Caco-2 (cell line): ENCODE measurements at regions of chr5 and their contacts with region 1.

Region 1: GRCh38 chr5:112283943-112284929 is 134.8 kb downstream of the EPB41L4A start:
- DNase-seq: no peak
- H3K4me3 ChIP-seq: no peak overlapping the region
- H3K4me3 Mint-ChIP-seq: no peak overlapping the region
- H3K27ac Mint-ChIP-seq: no peak overlapping the region
- H3K4me1 ChIP-seq: no peaks in the 10 kb centered on the region
- H3K4me1 Mint-ChIP-seq: no peaks in the 10 kb centered on the region
- H3K27me3 ChIP-seq: 0 out of 2 replicates have a peak, but pooled peaks cover 2% of the 10 kb centered on the region
- H3K27me3 Mint-ChIP-seq: peaks cover under 1% of the 10 kb centered on the region
- CTCF ChIP-seq: no peak

Region 2: GRCh38 chr5:111742177-111742994 is 541.9 kb before region 1 on chr5:
- CTCF ChIA-PET with region 1: no interaction called
- POLR2A ChIA-PET with region 1: no interaction called
- intact Hi-C with region 1: no loop called
- DNase-seq: no peak
- H3K4me3 ChIP-seq: no peak overlapping the region
- H3K4me3 Mint-ChIP-seq: no peak overlapping the region
- H3K27ac Mint-ChIP-seq: no peak overlapping the region
- H3K4me1 ChIP-seq: no peaks in the 10 kb centered on the region
- H3K4me1 Mint-ChIP-seq: no peaks in the 10 kb centered on the region
- H3K27me3 ChIP-seq: no peaks in the 10 kb centered on the region
- H3K27me3 Mint-ChIP-seq: no peaks in the 10 kb centered on the region
- CTCF ChIP-seq: no peak

Region 3: GRCh38 chr5:112165897-112166806 is 118.1 kb before region 1 on chr5:
- CTCF ChIA-PET with region 1: no interaction called
- POLR2A ChIA-PET with region 1: no interaction called
- intact Hi-C with region 1: no loop called
- DNase-seq: peak; percentile 42 to 53
- H3K4me3 ChIP-seq: no peak overlapping the region
- H3K4me3 Mint-ChIP-seq: no peak overlapping the region
- H3K27ac Mint-ChIP-seq: peak overlapping the region; percentile 89
- H3K4me1 ChIP-seq: peaks cover 6% of the 10 kb centered on the region
- H3K4me1 Mint-ChIP-seq: peaks cover 22% of the 10 kb centered on the region
- H3K27me3 ChIP-seq: no peaks in the 10 kb centered on the region
- H3K27me3 Mint-ChIP-seq: no peaks in the 10 kb centered on the region
- CTCF ChIP-seq: no peak

Region 4: GRCh38 chr5:112245616-112246015 is 38.6 kb before region 1 on chr5:
- CTCF ChIA-PET with region 1: no interaction called
- POLR2A ChIA-PET with region 1: no interaction called
- intact Hi-C with region 1: loop called (anchors 1 kb)
- DNase-seq: peak in 1 of 2 experiments; percentile 18
- H3K4me3 ChIP-seq: no peak overlapping the region
- H3K4me3 Mint-ChIP-seq: no peak overlapping the region
- H3K27ac Mint-ChIP-seq: no peak overlapping the region
- H3K4me1 ChIP-seq: no peaks in the 10 kb centered on the region
- H3K4me1 Mint-ChIP-seq: peaks cover 13% of the 10 kb centered on the region
- H3K27me3 ChIP-seq: no peaks in the 10 kb centered on the region; the same call in 1 of the 2 replicates
- H3K27me3 Mint-ChIP-seq: peaks cover 6% of the 10 kb centered on the region
- CTCF ChIP-seq: peak in 1 of 2 experiments; percentile 24

Region 5: DNA sequence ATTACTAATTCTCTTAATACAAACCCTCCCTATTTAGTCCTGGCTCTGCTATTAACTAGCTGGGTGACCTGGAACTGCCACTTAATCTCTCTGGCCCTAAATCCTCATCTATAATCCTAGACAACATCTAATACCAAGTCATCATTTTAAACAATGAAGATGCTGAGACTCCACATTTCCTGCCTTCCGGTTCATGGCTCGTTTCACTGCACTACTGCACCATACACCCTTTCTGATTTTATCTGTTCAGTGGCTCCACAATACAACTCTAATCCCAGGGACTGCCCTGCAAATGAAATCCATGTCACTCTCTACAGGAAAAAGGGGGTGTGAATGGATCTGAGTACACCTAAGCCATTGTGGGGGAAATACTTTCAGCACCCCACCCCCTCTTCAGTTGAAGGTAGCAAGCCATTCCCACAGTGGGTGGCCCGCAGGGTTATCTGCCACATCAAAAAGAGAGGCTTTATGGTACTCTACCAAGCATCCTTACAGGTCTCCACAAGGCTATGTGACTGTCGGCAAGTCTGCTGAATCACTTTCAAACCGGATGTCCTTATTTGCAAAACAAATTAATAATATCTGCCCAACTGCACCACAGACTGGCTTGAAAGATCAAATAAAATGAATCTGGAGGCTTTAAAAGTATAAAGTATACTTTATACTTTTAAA is 45.3 kb after region 1 on chr5:
- CTCF ChIA-PET with region 1: no interaction called
- POLR2A ChIA-PET with region 1: no interaction called
- intact Hi-C with region 1: no loop called
- DNase-seq: no peak
- H3K4me3 ChIP-seq: no peak overlapping the region
- H3K4me3 Mint-ChIP-seq: no peak overlapping the region
- H3K27ac Mint-ChIP-seq: no peak overlapping the region
- H3K4me1 ChIP-seq: no peaks in the 10 kb centered on the region
- H3K4me1 Mint-ChIP-seq: no peaks in the 10 kb centered on the region
- H3K27me3 ChIP-seq: no peaks in the 10 kb centered on the region
- H3K27me3 Mint-ChIP-seq: peaks cover 6% of the 10 kb centered on the region
- CTCF ChIP-seq: no peak